Cardiac septum (tissue), 1 donor: ENCODE measurements at regions of chr16 and their contacts with region 1.

Region 1: GRCh38 chr16:63361032-63361624 is 1324.9 kb upstream of the CDH8 start:
- DNase-seq: no peak

Region 2: DNA sequence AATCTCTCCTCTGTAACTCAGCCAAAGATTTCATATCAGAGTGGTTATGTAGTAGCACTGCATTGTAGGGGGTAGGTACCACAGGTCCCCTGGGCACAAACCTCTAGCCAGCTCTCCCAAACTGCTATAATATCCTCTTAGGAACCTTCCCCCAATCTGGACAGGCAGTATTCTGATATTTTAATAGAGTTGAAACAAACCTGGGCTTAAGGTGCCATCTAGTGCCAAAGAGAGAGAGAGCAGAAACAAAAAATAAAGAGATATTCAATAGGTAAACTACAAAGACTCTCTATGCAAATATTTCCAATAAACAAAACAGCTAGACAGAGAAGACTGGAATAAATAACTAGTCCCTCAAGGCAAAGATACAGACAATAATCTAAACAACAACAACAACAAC is 690.7 kb after region 1 on chr16:
- intact Hi-C with region 1: loop called (anchors 5 kb)
- DNase-seq: no peak